ENCODE measurements at regions of chr11 and their contacts with region 1.

Region 1: DNA sequence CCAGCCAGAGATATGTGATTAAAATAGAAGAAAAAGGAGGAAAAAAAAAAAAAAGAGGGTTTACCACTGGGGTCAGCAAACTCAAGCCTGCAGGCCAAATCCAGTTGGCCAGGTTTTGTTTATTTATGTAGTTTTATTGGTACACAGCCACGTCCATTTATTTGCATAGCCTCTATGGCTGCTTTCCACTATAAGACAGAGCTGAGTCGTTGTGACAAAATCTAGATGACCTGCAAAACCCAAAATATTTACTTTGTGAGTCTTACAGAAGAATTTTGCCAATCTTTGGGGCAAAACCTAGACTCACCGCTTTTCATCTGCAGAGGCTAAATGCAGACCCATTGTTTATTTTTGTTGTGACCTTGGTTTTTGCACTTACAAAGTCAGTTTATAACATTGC is 87.1 kb downstream of the TENM4 start:
- DNase-seq: no peak
- H3K4me3 ChIP-seq: no peak overlapping the region
- H3K27ac ChIP-seq: no peak overlapping the region
- H3K27me3 ChIP-seq: no peaks in the 10 kb centered on the region
- CTCF ChIP-seq: no peak

Region 2: GRCh38 chr11:79244241-79244772 is 109.4 kb before region 1 on chr11:
- CTCF ChIA-PET with region 1: no interaction called
- POLR2A ChIA-PET with region 1: no interaction called
- DNase-seq: peak; percentile 85
- H3K4me3 ChIP-seq: no peak overlapping the region
- H3K27ac ChIP-seq: peak overlapping the region; percentile 94
- H3K27me3 ChIP-seq: no peaks in the 10 kb centered on the region
- CTCF ChIP-seq: no peak

Region 3: GRCh38 chr11:79342686-79343085 is 11.0 kb before region 1 on chr11:
- CTCF ChIA-PET with region 1: interaction called, 10 read pairs
- POLR2A ChIA-PET with region 1: no interaction called
- DNase-seq: no peak
- H3K4me3 ChIP-seq: no peak overlapping the region
- H3K27ac ChIP-seq: no peak overlapping the region
- H3K27me3 ChIP-seq: no peaks in the 10 kb centered on the region
- CTCF ChIP-seq: no peak

Measured in AG04450 (cell line).